SK-MEL-5 (cell line): ENCODE measurements at regions of chr3 and their contacts with region 1.

Region 1: DNA sequence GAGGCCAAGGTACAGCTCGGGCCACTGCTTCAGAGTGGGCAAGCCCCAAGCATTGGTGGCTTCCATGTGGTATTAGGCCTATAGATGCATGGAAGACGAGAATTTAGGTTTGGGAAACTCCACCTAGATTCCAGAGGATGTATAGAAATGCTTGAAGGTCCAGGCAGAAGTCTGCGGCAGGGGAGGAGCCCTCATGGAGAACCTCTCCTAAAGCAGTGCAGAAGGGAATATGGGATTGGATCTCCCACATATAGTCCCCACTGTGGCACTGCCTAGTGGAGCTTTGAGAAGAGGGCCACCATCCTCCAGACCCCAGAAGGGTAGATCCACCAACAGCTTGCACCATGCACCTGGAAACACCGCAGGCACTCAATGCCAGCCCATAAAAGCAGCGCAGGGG is 48.1 kb upstream of the XXYLT1 start:
- DNase-seq: no peak

Region 2: GRCh38 chr3:195197765-195198425 is 121.2 kb before region 1 on chr3:
- in situ Hi-C with region 1: no loop called
- DNase-seq: no peak

Region 3: DNA sequence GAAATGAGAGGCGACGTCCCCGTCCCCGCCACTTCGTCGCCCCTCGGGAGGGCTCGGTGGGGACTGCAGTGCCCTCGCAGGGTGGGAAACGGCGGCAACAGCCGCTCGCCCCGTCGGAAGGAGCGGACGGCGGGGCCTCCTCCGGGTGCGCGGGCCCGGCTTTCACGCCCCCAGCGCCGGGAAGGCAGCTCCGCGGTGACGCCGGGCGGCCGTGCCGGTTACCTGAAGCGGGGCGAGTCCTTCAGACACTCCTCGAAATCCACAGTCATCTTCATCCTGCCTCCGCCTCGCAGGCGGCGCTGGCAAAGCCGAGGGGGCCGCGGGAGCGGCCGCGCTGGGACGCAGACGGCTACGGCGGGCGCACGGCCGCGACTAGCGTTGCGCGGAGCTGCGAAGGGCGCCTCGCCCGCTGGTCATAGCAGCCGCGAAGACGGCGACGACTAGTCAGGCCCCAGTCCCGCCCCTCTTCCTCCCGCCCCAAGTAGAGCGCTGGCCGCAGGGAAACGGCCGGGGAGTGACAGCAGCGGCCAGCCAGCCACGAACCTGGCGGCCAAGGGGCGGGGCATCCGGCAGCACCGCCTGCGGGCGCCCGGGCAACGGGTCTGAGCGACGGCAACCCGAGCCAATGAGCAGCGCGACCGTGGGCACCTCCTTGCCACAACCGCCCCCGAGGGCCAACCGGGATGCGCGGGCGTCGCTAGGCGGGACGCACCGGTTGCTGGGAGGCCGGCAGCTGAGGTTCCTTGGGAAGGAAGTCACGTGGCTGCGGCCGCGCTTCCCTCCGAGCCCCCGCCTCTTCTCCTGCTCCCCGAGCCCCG is 123.7 kb after region 1 on chr3 and contains the start of gene ACAP2:
- in situ Hi-C with region 1: loop called (anchors 25 kb)
- DNase-seq: peak; percentile 98
- total RNA-seq, gene ACAP2: 71.4 and 84.7 TPM in 2 replicates